A549 (cell line): ENCODE measurements at regions of chr16 and their contacts with region 1.

Region 1: GRCh38 chr16:4253394-4254150 is 11.7 kb upstream of the SRL start:
- DNase-seq: peak; percentile 95 to 100
- ATAC-seq: peak; percentile 95 to 96
- H3K4me3 ChIP-seq: peak overlapping the region; percentile 49
- H3K27ac ChIP-seq: peak overlapping the region; percentile 74 to 88
- H3K4me1 ChIP-seq: no peaks in the 10 kb centered on the region
- CTCF ChIP-seq: no peak
- EP300 ChIP-seq: no peak
- POLR2A ChIP-seq: peak; percentile 95
- RAD21 ChIP-seq: peak in 1 of 2 experiments; percentile 95; a peak in 4 of 5 replicates

Region 2: DNA sequence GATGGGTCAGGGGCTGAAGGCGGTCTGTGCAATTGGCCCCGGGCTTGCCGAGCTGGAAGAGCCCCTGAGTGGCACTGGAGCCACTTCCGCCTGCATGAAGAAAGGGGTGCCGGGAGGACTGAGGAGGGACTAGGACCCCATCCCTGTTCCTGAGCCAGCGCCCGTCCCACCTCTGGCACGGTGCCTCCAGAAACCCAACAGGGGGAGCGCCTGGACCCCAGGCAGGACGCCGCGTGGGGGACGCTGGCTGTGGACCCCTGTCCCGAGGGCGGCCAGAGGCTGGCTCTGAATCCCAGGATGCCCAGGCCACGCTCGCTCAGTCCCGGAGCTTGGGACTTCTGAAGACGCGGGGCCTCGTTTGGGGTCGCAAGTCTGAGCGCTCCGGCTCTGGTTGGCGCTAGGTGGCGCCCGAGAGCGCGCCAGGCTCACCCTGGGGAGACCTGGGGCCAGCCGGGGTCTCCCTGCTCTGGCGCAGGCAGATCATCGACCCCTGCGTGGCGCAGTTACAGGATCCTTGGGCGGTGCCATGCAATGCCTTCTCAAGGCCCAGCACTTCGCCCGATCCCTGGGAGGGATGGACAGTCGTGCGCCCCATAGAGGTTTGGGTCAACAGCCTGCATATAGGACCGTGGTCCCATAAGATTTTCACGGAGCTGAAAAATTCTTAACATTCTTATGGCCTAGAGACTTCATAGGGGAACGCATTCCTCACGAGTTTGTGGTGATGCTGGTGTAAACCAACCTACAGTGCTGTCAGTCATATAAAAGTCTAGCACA is 314.5 kb before region 1 on chr16:
- CTCF ChIA-PET with region 1: interaction called, 11 read pairs
- POLR2A ChIA-PET with region 1: interaction called, 3 read pairs
- DNase-seq: peak; percentile 56 to 86
- ATAC-seq: peak; percentile 93 to 95
- H3K4me3 ChIP-seq: peak overlapping the region; percentile 46
- H3K27ac ChIP-seq: peak overlapping the region; percentile 54 to 83; a peak in 5 of 6 replicates
- H3K4me1 ChIP-seq: peaks cover 10% of the 10 kb centered on the region
- CTCF ChIP-seq: peak; percentile 93
- EP300 ChIP-seq: no peak
- POLR2A ChIP-seq: no peak; the same call in 1 of the 2 replicates
- RAD21 ChIP-seq: peak; percentile 62 to 72

Region 3: GRCh38 chr16:4116337-4117249 is 137.0 kb before region 1 on chr16 and contains the start of gene ADCY9:
- CTCF ChIA-PET with region 1: interaction called, 16 read pairs
- POLR2A ChIA-PET with region 1: interaction called, 6 read pairs
- DNase-seq: peak; percentile 69 to 86
- ATAC-seq: peak; percentile 78 to 79
- H3K4me3 ChIP-seq: peak within 1 kb of the TSS; percentile 92
- H3K27ac ChIP-seq: peak within 1 kb of the TSS; percentile 82 to 95
- H3K4me1 ChIP-seq: peaks cover 36% of the 10 kb centered on the region
- CTCF ChIP-seq: no peak
- EP300 ChIP-seq: no peak
- POLR2A ChIP-seq: peak; percentile 73
- RAD21 ChIP-seq: no peak
- polyA plus RNA-seq, gene ADCY9: 6.2 and 6.9 TPM in 2 replicates

Region 4: DNA sequence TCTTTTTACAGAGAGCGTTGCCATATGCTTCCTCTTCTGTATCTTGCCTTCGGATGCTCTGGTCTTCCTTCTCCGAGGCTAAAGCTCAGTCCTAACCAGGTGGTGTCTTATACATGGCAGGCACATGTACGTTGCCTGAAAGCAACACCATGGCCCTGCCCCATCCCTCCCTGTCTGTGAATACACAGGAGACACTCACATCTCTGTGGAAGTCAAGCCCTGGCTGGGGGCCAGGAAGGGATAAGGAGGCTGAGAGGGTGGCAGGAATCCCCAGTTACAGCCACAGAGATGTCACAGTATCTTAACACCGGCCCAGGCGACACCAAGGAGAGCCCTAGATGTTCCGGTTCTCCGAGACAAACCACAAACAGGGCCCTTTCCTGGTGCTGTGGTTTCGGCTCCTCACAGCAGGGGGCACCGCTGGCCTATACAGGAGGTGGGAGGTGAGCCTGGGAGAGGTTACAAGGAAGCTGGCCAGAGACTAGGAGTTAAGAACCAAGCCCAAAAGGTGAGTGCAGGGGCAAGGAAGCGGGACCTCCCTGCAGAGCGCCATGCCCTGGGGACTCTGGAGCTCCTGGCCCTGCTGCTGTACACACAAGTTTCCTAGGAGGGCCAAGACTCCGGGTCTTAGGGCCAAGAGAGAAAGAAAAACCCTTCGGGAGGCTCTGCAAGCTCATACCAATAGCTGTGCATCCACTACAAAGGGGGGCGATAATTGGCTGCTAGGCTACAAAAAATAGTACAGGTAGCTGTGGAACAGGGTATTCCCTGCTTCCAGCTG is 53.4 kb before region 1 on chr16:
- CTCF ChIA-PET with region 1: interaction called, 203 read pairs
- POLR2A ChIA-PET with region 1: interaction called, 17 read pairs
- DNase-seq: peak; percentile 72 to 74
- ATAC-seq: peak; percentile 96
- H3K4me3 ChIP-seq: no peak overlapping the region
- H3K27ac ChIP-seq: peak overlapping the region in 1 of 2 experiments; percentile 65; a peak in 3 of 6 replicates
- H3K4me1 ChIP-seq: peaks cover 7% of the 10 kb centered on the region; the same call in 2 of the 3 replicates
- CTCF ChIP-seq: peak; percentile 66
- EP300 ChIP-seq: no peak
- POLR2A ChIP-seq: no peak
- RAD21 ChIP-seq: peak; percentile 86 to 89

Region 5: DNA sequence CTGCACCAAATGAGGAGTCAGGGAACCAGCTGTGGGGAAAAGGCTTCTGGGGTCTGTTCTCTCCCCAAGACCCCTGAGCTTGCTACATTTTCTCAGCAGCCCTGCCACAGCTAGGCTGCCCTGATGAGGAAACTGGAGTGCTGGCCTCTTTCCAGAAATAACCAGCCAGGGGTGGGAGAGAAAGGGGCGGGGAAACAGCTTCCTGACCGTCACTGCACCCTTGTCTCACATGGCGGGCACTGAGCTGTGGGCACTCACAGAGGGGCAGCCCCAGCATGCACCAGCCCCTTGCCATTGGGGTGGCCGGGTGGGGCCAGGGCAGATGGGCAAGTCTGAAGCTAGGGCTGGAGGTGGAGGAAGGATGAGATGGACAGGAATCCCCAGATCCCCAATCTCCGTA is 14.6 kb before region 1 on chr16:
- CTCF ChIA-PET with region 1: interaction called, 32 read pairs
- POLR2A ChIA-PET with region 1: interaction called, 6 read pairs
- DNase-seq: no peak
- ATAC-seq: no peak
- H3K4me3 ChIP-seq: no peak overlapping the region
- H3K27ac ChIP-seq: no peak overlapping the region
- H3K4me1 ChIP-seq: no peaks in the 10 kb centered on the region
- CTCF ChIP-seq: no peak
- EP300 ChIP-seq: no peak
- POLR2A ChIP-seq: no peak
- RAD21 ChIP-seq: no peak

Region 6: DNA sequence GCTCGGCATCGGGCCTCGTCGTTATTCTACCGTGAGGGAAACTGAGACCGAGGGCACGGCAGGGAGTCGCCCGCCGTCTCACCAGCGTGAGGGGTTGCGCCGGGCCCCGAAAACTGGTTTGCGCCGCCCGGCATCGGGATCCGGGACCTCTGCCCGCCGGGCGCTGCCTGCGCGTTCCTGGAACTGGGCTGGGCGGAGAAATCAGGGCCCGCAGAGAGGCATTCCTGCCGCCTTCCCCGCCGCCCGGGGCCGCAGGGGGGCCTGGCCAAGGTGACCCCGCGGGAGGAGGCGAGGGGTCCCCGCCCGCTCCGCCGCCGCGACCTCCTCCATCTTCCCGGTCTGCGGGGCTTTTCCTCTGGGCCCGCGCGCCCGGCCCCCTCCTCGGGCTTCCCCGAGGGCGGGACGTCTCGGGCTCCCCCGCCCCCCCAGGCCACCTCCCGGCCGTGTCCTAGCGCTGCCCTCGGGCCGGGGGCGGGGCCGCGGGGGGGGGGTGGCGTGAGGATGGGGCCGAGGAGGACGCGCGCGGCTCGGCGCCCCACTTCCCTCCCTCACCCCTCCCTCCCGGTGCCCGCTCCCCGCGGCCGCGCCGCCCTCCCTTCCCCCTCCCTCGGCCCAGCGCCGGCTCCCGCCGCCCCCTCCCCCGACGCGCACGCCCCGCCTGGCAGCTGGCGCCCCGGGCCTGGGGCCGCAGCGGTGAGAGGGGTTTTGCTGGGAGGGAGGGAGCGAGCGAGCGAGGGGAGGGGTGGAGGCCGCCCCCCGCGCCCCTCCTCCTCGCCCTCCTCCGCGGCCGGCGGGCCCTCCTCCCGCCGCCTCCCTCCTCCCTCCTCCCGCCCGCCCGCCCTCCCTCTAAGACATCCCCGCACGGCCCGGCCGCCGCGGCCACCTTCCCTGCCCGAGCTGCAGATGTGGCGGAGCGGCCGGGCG is 61.9 kb after region 1 on chr16 and contains the start of gene GLIS2:
- CTCF ChIA-PET with region 1: interaction called, 13 read pairs
- POLR2A ChIA-PET with region 1: interaction called, 5 read pairs
- DNase-seq: peak; percentile 78 to 89
- ATAC-seq: peak; percentile 36 to 37
- H3K4me3 ChIP-seq: peak within 1 kb of the TSS; percentile 87
- H3K27ac ChIP-seq: peak within 1 kb of the TSS; percentile 96
- H3K4me1 ChIP-seq: peaks cover 52% of the 10 kb centered on the region
- CTCF ChIP-seq: no peak
- EP300 ChIP-seq: peak in 1 of 2 experiments; percentile 51; a peak in 2 of 5 replicates
- POLR2A ChIP-seq: no peak; the same call in none of the 2 replicates
- RAD21 ChIP-seq: no peak; a peak in 1 of 5 replicates
- polyA plus RNA-seq, gene GLIS2: 5.5 and 6.8 TPM in 2 replicates

Region 7: DNA sequence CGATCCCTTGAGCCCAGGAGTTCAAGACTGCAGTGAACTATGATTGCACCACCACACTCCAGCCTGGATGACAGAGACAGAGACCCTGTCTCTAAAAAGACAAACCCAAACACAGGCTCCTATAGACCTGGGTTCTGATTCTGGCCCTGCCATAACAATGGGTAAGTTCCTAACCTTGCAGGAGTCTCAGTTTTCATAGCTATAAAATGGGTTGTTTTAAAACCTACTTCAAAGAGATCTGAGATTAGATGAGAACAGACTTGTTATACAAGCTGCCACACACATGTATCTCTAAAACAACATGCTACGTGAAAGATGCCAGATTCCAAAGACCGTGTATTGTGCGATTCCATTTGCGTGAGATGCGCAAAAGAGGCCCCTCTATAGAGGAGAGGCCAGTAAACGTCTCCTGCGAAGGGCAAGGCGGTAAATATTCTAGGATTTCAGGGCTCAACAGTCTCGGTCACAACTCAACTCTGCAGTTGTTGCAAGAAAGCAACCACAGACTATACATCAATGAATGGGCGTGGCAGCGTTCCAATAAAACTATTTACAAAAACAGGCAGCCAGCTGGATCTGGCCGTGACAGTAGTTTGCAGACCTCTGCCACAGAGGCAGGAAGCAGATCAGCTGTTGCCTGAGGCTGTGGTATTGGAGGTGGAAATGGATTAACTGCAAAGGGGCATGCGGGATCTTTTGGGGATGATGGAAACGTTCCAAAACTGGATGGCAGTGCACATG is 156.9 kb after region 1 on chr16:
- CTCF ChIA-PET with region 1: interaction called, 10 read pairs
- POLR2A ChIA-PET with region 1: no interaction called
- DNase-seq: no peak
- ATAC-seq: no peak
- H3K4me3 ChIP-seq: no peak overlapping the region
- H3K27ac ChIP-seq: no peak overlapping the region
- H3K4me1 ChIP-seq: peaks cover 8% of the 10 kb centered on the region
- CTCF ChIP-seq: no peak
- EP300 ChIP-seq: no peak
- POLR2A ChIP-seq: no peak
- RAD21 ChIP-seq: no peak